ENCODE measurements at regions of chr9 and their contacts with region 1.

Region 1: GRCh38 chr9:79686381-79687130 is 114.8 kb downstream of the TLE4 start:
- DNase-seq: no peak
- H3K4me3 ChIP-seq: no peak overlapping the region
- H3K27ac ChIP-seq: no peak overlapping the region
- H3K4me1 ChIP-seq: peaks cover 4% of the 10 kb centered on the region
- H3K27me3 ChIP-seq: no peaks in the 10 kb centered on the region
- CTCF ChIP-seq: no peak

Region 2: GRCh38 chr9:79799691-79800335 is 113.3 kb after region 1 on chr9:
- dilution Hi-C with region 1: loop called (anchors 25 kb)
- DNase-seq: no peak
- H3K4me3 ChIP-seq: no peak overlapping the region
- H3K27ac ChIP-seq: no peak overlapping the region
- H3K4me1 ChIP-seq: peaks cover 5% of the 10 kb centered on the region
- H3K27me3 ChIP-seq: no peaks in the 10 kb centered on the region
- CTCF ChIP-seq: no peak